Colonic mucosa (tissue), 4 donors: ENCODE measurements at regions of chr11 and their contacts with region 1.

Region 1: GRCh38 chr11:117891362-117891761 is 14.9 kb upstream of the FXYD6 start:
- DNase-seq: no peak
- H3K4me3 ChIP-seq: no peak overlapping the region
- H3K27ac ChIP-seq: no peak overlapping the region
- H3K4me1 ChIP-seq: no peaks in the 10 kb centered on the region
- H3K27me3 ChIP-seq: no peaks in the 10 kb centered on the region
- CTCF ChIP-seq: no peak

Region 2: DNA sequence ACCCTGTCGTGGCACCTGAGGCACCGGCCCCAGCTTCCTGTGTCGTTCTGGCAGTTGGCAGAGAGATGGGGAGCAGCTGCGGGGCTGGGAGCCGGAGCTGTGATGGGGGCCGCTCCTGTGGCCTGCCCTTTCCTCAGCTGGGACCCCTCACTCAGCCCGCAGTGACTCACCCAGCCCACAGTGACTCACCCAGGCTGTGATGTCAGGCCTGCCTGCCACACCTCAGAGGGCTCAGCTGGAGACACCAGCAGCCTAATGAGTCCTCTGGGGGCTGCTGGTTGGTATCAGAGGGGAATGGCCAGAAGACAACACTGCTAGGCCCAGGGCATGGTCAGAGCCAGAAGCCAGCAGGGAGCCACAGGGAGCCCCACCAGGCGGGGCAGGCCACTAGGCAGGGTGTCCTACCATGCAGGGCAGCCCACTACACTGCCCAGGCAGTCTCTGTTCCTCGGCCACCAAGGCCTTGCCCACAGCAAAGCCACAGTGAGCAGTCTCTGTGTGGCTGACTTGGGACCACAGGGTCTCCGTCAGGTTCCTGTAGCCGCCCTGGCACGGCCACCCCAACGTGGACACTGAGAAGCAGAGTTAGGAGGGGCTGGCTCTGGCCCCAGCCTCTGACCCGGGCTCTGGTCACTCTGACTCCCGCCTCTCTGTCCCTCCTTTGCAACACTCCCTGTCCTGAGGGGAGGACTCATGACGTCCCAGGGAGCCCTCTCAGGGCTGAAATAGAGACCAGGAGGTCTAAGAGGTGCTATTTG is 62.6 kb before region 1 on chr11:
- intact Hi-C with region 1: no loop called
- DNase-seq: peak; percentile 35
- H3K4me3 ChIP-seq: no peak overlapping the region
- H3K27ac ChIP-seq: peak overlapping the region; percentile 11
- H3K4me1 ChIP-seq: no peaks in the 10 kb centered on the region
- H3K27me3 ChIP-seq: no peaks in the 10 kb centered on the region
- CTCF ChIP-seq: no peak

Region 3: DNA sequence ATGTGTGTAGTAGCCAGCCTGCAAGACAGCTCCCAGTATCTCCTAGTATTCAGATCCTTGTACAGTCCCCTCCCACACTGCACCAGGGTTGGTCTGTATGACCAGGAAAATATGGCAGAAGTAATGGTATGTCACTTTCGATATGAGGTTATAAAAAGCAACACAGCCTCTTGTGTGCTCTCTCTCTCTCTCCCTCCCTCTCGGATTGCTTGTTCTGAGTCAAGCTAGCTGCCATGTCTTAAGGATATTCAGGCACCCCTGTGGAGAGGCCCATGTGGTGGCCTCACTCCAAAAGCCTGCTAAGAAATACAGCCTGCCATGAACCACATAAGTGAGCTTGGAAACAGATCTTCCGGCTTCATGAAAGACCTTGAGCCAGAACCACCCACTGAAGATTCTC is 40.3 kb before region 1 on chr11:
- intact Hi-C with region 1: loop called (anchors 5 kb)
- DNase-seq: peak; percentile 17
- H3K4me3 ChIP-seq: no peak overlapping the region
- H3K27ac ChIP-seq: no peak overlapping the region
- H3K4me1 ChIP-seq: no peaks in the 10 kb centered on the region
- H3K27me3 ChIP-seq: no peaks in the 10 kb centered on the region
- CTCF ChIP-seq: no peak